CD4-positive, alpha-beta memory T cell (primary cell): ENCODE measurements at regions of chr1 and their contacts with region 1.

Region 1: GRCh38 chr1:37486680-37487618 is 12.6 kb downstream of the ZC3H12A start:
- DNase-seq: peak; percentile 69 to 80 (median 71)
- H3K4me3 ChIP-seq: no peak overlapping the region
- H3K4me3 Mint-ChIP-seq: no peak overlapping the region
- H3K27ac ChIP-seq: peak overlapping the region; percentile 42
- H3K27ac Mint-ChIP-seq: peak overlapping the region; percentile 78 to 100 (median 91)
- H3K4me1 ChIP-seq: peaks cover 17% of the 10 kb centered on the region
- H3K4me1 Mint-ChIP-seq: peaks cover 8 to 21% (median 14%) of the 10 kb centered on the region in 4 donors
- H3K27me3 ChIP-seq: no peaks in the 10 kb centered on the region
- H3K27me3 Mint-ChIP-seq: no peaks in the 10 kb centered on the region

Region 2: DNA sequence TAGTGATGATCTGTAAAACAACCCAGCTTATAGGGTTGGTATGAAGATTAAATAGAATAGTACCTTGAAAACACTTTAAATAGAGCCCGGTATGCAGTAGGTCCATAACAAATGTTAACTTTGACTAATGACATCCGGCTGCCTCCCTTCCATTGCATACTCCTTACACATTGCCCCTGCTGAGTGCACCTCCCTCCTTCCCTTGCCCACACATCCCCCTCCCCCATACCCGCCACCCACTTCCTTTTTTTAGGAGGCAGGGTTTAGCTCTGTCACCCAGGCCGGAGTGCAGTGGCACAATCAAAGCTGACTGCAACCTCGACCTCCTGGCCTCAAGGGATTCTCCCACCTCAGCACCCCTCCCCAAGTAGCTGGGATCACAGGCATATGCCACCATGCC is 37.0 kb before region 1 on chr1:
- CTCF ChIA-PET with region 1: interaction called, 417 read pairs
- POLR2A ChIA-PET with region 1: interaction called, 76 read pairs
- intact Hi-C with region 1: loop called (anchors 1 kb)
- DNase-seq: peak in 3 of 5 donors; percentile 13 to 22 (median 16)
- H3K4me3 ChIP-seq: no peak overlapping the region
- H3K4me3 Mint-ChIP-seq: peak overlapping the region in 2 of 8 donors; percentile 17 to 42
- H3K27ac ChIP-seq: no peak overlapping the region
- H3K27ac Mint-ChIP-seq: peak overlapping the region in 1 of 7 donors; percentile 70
- H3K4me1 ChIP-seq: peaks cover 10% of the 10 kb centered on the region
- H3K4me1 Mint-ChIP-seq: peaks cover 4 to 14% (median 7%) of the 10 kb centered on the region in 4 donors
- H3K27me3 ChIP-seq: no peaks in the 10 kb centered on the region
- H3K27me3 Mint-ChIP-seq: peaks cover 4 to 8% of the 10 kb centered on the region in 2 donors

Region 3: DNA sequence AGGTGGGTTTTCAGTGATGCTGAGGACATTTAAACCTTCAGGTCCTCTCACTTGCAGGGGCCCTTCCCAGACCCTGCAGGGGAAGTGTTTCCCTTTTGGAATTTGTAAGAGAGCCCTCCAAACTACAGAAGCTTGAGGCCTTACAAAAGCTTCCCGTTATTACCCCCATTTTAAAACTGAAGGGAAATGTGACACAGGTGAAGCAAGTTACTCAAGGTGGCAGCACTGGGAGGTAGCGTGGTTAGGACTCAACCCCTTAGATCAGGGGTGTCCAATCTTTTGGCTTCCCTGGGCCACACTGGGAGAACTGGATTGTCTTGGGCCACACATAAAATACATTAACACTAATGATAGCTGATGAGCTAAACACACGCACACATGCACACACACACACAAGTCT is 28.4 kb before region 1 on chr1:
- CTCF ChIA-PET with region 1: interaction called, 417 read pairs
- POLR2A ChIA-PET with region 1: interaction called, 76 read pairs
- intact Hi-C with region 1: loop called (anchors 1 kb)
- DNase-seq: peak in 1 of 5 donors; percentile 6
- H3K4me3 ChIP-seq: no peak overlapping the region
- H3K4me3 Mint-ChIP-seq: no peak overlapping the region
- H3K27ac ChIP-seq: no peak overlapping the region
- H3K27ac Mint-ChIP-seq: peak overlapping the region in 1 of 7 donors; percentile 47
- H3K4me1 ChIP-seq: no peaks in the 10 kb centered on the region
- H3K4me1 Mint-ChIP-seq: peaks cover 5 to 9% (median 6%) of the 10 kb centered on the region in 4 donors
- H3K27me3 ChIP-seq: no peaks in the 10 kb centered on the region
- H3K27me3 Mint-ChIP-seq: no peaks in the 10 kb centered on the region

Region 4: DNA sequence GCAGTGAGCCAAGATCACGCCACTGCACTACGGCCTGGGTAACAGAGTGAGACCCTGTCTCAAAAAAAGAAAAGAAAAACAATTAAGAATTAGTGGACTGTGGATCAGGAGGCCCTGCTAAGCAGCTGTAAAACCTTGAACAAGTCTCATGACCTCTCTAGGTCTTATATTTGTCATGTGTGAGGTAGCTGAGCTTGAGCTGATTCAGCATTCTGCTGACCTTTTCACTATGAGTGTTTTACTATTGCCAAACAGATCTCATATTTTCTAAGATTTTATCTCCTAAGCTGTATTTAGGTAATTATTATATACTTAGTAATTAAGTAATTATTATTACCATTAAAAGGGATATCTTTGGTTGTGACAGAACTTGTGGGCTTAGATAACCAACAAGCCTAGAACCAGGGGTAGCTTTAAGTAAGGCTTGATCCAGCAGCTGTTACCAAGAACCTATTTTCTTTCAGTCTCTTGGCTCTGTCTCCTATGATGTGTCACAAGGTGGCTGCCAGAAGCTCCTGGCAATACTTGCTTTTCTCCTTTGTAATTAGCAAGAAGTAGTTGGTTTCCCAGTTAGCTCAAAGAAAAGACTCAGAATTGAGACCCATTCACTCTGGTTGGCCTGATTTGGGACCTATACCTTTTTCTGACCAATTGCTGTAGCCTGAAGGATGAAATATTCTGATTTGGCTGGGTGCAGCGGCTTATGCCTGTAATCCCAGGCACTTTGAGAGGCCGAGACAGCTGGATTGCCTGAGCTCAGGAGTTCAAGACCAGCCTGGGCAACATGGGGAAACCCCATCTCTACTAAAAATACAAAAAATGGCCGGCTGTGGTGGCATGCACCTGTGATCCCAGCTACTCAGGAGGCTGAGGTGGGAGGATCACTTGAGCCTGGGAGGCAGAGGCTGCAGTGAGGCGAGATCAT is 21.1 kb before region 1 on chr1:
- CTCF ChIA-PET with region 1: interaction called, 417 read pairs
- POLR2A ChIA-PET with region 1: interaction called, 229 read pairs
- intact Hi-C with region 1: no loop called
- DNase-seq: no peak
- H3K4me3 ChIP-seq: no peak overlapping the region
- H3K4me3 Mint-ChIP-seq: no peak overlapping the region
- H3K27ac ChIP-seq: no peak overlapping the region
- H3K27ac Mint-ChIP-seq: no peak overlapping the region
- H3K4me1 ChIP-seq: no peaks in the 10 kb centered on the region
- H3K4me1 Mint-ChIP-seq: peaks cover 6 to 10% (median 7%) of the 10 kb centered on the region in 4 donors
- H3K27me3 ChIP-seq: no peaks in the 10 kb centered on the region
- H3K27me3 Mint-ChIP-seq: no peaks in the 10 kb centered on the region

Region 5: DNA sequence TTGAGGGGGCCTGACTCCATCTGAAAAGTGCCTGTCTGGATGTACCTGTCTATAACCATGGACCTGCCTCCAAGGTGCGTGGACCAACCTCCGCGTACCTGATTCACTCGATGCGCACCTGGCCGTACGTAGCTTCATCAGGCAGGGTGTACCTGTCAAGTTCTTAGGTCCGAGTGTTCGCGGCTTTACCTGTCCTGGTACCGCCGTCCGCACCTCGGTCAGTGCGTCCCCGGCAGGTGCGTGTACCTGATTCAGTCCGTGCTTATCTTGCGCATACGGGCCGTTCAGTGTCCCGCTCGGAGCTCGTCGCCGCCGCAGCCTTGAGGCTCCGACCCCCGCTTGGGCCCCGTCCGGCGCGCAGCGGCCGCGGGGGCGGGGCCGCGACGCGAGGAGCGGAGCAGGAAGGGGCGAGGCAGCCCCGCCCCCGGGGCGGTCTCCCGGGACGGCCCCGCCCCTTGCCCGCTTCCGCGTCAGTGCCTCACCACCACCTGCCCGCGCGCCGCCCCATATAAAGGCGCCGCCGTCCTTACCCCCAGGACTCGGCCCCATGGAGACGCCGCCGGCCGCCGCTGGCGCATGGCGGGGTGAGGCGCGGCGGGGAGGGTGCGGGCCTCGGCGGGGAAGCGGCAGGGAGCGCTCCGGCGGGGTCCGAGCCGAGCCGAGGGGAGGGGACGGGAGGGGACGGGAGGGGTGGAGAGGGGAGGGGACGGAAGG is 12.7 kb before region 1 on chr1 and contains the start of gene ZC3H12A:
- CTCF ChIA-PET with region 1: interaction called, 219 read pairs
- POLR2A ChIA-PET with region 1: interaction called, 229 read pairs
- intact Hi-C with region 1: loop called (anchors 1 kb)
- DNase-seq: peak; percentile 89 to 94 (median 93)
- H3K4me3 ChIP-seq: peak within 1 kb of the TSS; percentile 85 to 96
- H3K4me3 Mint-ChIP-seq: peak within 1 kb of the TSS; percentile 95 to 99 (median 97)
- H3K27ac ChIP-seq: peak within 1 kb of the TSS; percentile 96
- H3K27ac Mint-ChIP-seq: peak within 1 kb of the TSS; percentile 97 to 100 (median 99)
- H3K4me1 ChIP-seq: peaks cover 37% of the 10 kb centered on the region
- H3K4me1 Mint-ChIP-seq: peaks cover 33 to 65% (median 43%) of the 10 kb centered on the region in 4 donors
- H3K27me3 ChIP-seq: no peaks in the 10 kb centered on the region
- H3K27me3 Mint-ChIP-seq: peaks cover 0 to 2% of the 10 kb centered on the region in 2 donors
- total RNA-seq, gene ZC3H12A: 54.6 to 60.7 TPM

Region 6: GRCh38 chr1:37498872-37499617 is 12.1 kb after region 1 on chr1:
- CTCF ChIA-PET with region 1: interaction called, 65 read pairs
- POLR2A ChIA-PET with region 1: interaction called, 3 read pairs
- intact Hi-C with region 1: no loop called
- DNase-seq: no peak
- H3K4me3 ChIP-seq: no peak overlapping the region
- H3K4me3 Mint-ChIP-seq: no peak overlapping the region
- H3K27ac ChIP-seq: no peak overlapping the region
- H3K27ac Mint-ChIP-seq: peak overlapping the region in 3 of 7 donors; percentile 27 to 48 (median 30)
- H3K4me1 ChIP-seq: no peaks in the 10 kb centered on the region
- H3K4me1 Mint-ChIP-seq: peaks cover 8 to 15% (median 13%) of the 10 kb centered on the region in 4 donors
- H3K27me3 ChIP-seq: no peaks in the 10 kb centered on the region
- H3K27me3 Mint-ChIP-seq: no peaks in the 10 kb centered on the region